Ascending aorta (tissue), 2 donors: ENCODE measurements at regions of chr19 and their contacts with region 1.

Region 1: DNA sequence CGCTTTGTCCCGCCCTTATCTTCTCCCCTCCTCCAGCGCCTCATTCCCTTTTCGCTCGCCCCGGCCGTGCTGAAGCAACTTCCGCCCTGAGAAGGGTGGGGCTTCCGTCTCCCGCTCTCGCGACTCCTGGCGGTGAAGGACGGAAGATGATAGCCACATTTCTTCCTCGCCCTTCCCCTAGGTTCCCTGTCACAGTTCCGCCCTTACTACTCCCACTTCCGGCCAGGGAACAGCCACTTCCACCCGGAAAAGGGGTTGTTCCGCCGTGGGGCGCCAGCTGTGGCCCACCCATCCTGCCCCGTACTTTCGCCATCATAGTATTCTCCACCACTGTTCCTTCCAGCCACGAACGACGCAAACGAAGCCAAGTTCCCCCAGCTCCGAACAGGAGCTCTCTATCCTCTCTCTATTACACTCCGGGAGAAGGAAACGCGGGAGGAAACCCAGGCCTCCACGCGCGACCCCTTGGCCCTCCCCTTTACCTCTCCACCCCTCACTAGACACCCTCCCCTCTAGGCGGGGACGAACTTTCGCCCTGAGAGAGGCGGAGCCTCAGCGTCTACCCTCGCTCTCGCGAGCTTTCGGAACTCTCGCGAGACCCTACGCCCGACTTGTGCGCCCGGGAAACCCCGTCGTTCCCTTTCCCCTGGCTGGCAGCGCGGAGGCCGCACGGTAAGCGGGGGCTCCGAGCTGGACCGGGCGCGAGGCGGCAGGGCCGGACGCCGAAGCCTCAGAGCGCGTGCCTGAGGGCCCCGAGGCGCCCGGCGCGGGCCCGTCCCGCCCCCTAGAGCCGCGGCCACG is at the start of gene RPS19:
- DNase-seq: peak; percentile 92 to 99
- H3K4me3 ChIP-seq: peak within 1 kb of the TSS; percentile 83 to 99
- H3K27ac ChIP-seq: peak within 1 kb of the TSS; percentile 92 to 95
- H3K4me1 ChIP-seq: peaks cover 23 to 27% of the 10 kb centered on the region in 2 donors
- H3K27me3 ChIP-seq: no peaks in the 10 kb centered on the region
- CTCF ChIP-seq: peak; percentile 60 to 63 (median 60)
- total RNA-seq, gene RPS19: 956 TPM

Region 2: DNA sequence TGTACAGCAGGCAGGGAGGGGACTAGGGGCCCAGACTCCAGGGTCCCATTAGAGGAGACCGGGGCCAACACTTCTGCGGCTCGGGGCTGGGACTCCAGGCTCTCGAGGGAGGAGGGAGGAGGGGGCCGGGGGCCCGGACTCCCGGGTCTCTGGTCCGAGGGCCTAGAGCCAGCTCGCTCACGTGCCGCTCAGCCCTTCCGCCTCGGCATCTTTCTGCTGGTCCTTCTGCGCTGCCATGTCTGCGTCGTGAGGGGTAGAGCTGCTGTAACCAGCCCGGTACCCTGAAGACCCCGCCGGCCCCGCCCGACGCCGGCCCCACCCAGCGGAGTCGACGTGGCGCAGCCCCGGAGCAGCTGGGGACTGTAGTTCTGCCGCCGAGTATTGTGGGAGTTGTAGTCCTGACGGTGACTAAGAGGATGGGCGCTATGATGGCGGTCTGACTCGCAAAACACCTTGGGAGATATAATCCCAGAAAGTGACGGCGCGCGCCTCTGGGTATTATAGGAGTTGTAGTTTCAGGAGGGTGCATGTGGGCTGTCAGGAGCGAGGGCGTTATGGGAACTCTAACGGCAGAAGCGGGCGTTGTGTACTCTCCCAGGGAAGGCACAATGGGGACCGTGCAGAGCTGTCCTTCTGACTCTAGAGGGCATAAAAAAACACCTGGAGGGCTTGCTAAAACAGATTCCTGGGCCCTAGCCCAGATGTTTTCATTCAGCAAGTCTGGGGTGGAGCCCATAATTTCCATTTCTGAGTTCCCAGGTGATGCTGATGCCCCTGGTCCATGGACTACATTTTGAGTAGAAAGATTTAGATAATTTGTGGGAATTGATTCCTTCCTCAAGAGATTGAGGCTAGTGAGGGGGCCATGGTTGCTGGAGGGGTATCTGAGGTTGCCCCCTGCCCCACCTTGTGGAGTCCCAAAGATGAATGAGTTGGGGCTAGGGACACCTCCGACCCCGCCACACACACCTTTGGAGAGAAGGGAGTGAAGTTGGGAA is 99.5 kb after region 1 on chr19 and contains the start of gene RABAC1:
- intact Hi-C with region 1: loop called (anchors 1 kb)
- DNase-seq: peak; percentile 64 to 95
- H3K4me3 ChIP-seq: peak within 1 kb of the TSS; percentile 83 to 96
- H3K27ac ChIP-seq: peak within 1 kb of the TSS; percentile 92 to 93
- H3K4me1 ChIP-seq: peaks cover 3 to 9% of the 10 kb centered on the region in 2 donors
- H3K27me3 ChIP-seq: no peaks in the 10 kb centered on the region
- CTCF ChIP-seq: no peak
- total RNA-seq, gene RABAC1: 360 TPM

Region 3: DNA sequence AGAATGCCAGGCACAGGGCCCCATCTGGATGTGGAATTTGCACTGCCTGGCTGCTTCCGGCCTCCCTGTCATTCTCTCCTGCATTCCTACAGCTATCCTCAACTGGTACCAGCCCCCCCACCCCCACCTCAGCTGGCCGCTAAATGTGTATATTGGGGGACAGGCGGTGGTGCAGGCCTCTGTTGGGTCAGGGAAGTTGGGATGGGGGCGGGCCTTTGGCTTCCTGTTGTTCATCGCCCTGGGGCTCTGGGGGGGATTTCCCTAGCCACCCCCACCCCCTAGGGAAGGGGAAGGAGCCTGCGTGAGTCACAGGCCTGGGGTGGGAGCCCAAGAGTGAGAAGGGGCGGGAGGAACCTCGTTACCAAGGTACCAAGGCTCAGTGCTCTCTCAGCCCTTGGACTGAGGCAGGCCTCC is 261.8 kb after region 1 on chr19:
- intact Hi-C with region 1: no loop called
- DNase-seq: peak; percentile 34 to 73
- H3K4me3 ChIP-seq: no peak overlapping the region
- H3K27ac ChIP-seq: no peak overlapping the region
- H3K4me1 ChIP-seq: no peaks in the 10 kb centered on the region
- H3K27me3 ChIP-seq: no peaks in the 10 kb centered on the region
- CTCF ChIP-seq: no peak

Region 4: GRCh38 chr19:42401365-42402303 is 541.8 kb after region 1 on chr19:
- intact Hi-C with region 1: loop called (anchors 10 kb)
- DNase-seq: peak; percentile 29 to 89
- H3K4me3 ChIP-seq: peak overlapping the region; percentile 65 to 75
- H3K27ac ChIP-seq: peak overlapping the region in 1 of 2 donors; percentile 4
- H3K4me1 ChIP-seq: peaks cover 7 to 14% of the 10 kb centered on the region in 2 donors
- H3K27me3 ChIP-seq: no peaks in the 10 kb centered on the region
- CTCF ChIP-seq: peak; percentile 45 to 71 (median 71)